ENCODE measurements at regions of chr22 and their contacts with region 1.

Region 1: GRCh38 chr22:50696797-50697561 is 24.4 kb downstream of the SHANK3 start:
- DNase-seq: peak; percentile 76
- ATAC-seq: peak; percentile 55
- H3K4me3 Mint-ChIP-seq: peak overlapping the region; percentile 73
- H3K27ac Mint-ChIP-seq: no peak overlapping the region
- H3K4me1 Mint-ChIP-seq: peaks cover 8% of the 10 kb centered on the region
- H3K27me3 Mint-ChIP-seq: peaks cover 37% of the 10 kb centered on the region
- CTCF ChIP-seq: peak; percentile 71

Region 2: GRCh38 chr22:50620593-50621355 is 76.2 kb before region 1 on chr22:
- CTCF ChIA-PET with region 1: interaction called, 78 read pairs
- POLR2A ChIA-PET with region 1: no interaction called
- DNase-seq: peak; percentile 92
- ATAC-seq: peak; percentile 93
- H3K4me3 Mint-ChIP-seq: peak overlapping the region; percentile 57
- H3K27ac Mint-ChIP-seq: no peak overlapping the region
- H3K4me1 Mint-ChIP-seq: peaks cover 24% of the 10 kb centered on the region
- H3K27me3 Mint-ChIP-seq: peaks cover 16% of the 10 kb centered on the region; the same call in 1 of the 2 replicates
- CTCF ChIP-seq: no peak; the same call in 1 of the 2 replicates

Region 3: GRCh38 chr22:50627642-50628542 is 69.1 kb before region 1 on chr22 and contains the start of gene ARSA:
- CTCF ChIA-PET with region 1: interaction called, 78 read pairs
- POLR2A ChIA-PET with region 1: interaction called, 3 read pairs
- DNase-seq: peak; percentile 82
- ATAC-seq: peak; percentile 83
- H3K4me3 Mint-ChIP-seq: peak within 1 kb of the TSS; percentile 80
- H3K27ac Mint-ChIP-seq: no peak within 1 kb of the TSS
- H3K4me1 Mint-ChIP-seq: peaks cover 7% of the 10 kb centered on the region
- H3K27me3 Mint-ChIP-seq: peaks cover 18% of the 10 kb centered on the region
- CTCF ChIP-seq: no peak
- total RNA-seq, gene ARSA: 17.7 to 18.8 TPM (median 17.8 TPM) in 3 replicates

Region 4: GRCh38 chr22:50641696-50642607 is 55.0 kb before region 1 on chr22:
- CTCF ChIA-PET with region 1: interaction called, 30 read pairs
- POLR2A ChIA-PET with region 1: no interaction called
- DNase-seq: peak; percentile 77
- ATAC-seq: peak; percentile 97
- H3K4me3 Mint-ChIP-seq: peak overlapping the region; percentile 43
- H3K27ac Mint-ChIP-seq: peak overlapping the region; percentile 70
- H3K4me1 Mint-ChIP-seq: peaks cover 23% of the 10 kb centered on the region
- H3K27me3 Mint-ChIP-seq: peaks cover 3% of the 10 kb centered on the region; the same call in 1 of the 2 replicates
- CTCF ChIP-seq: no peak

Region 5: DNA sequence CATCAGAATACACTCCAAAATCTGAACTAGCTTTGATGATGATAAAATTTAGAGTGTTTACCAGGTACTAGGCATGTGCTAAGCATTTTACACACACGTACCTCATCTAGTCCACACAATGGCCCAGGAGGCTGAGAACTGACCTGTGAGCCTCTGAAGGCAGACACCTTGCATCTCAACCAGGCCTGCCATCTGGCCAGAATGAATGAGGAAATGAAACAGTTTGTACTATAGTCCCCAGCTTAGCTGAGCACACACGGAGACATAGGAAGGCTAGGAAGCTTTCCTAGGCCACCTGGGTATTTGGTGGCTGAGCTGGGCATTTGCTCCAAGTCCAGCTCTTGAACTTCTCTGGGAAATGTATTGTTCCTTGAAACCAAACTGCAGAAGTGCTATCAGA is 31.2 kb before region 1 on chr22:
- CTCF ChIA-PET with region 1: no interaction called
- POLR2A ChIA-PET with region 1: no interaction called
- DNase-seq: no peak
- ATAC-seq: no peak
- H3K4me3 Mint-ChIP-seq: no peak overlapping the region
- H3K27ac Mint-ChIP-seq: no peak overlapping the region
- H3K4me1 Mint-ChIP-seq: no peaks in the 10 kb centered on the region
- H3K27me3 Mint-ChIP-seq: peaks cover 72% of the 10 kb centered on the region
- CTCF ChIP-seq: no peak

Region 6: DNA sequence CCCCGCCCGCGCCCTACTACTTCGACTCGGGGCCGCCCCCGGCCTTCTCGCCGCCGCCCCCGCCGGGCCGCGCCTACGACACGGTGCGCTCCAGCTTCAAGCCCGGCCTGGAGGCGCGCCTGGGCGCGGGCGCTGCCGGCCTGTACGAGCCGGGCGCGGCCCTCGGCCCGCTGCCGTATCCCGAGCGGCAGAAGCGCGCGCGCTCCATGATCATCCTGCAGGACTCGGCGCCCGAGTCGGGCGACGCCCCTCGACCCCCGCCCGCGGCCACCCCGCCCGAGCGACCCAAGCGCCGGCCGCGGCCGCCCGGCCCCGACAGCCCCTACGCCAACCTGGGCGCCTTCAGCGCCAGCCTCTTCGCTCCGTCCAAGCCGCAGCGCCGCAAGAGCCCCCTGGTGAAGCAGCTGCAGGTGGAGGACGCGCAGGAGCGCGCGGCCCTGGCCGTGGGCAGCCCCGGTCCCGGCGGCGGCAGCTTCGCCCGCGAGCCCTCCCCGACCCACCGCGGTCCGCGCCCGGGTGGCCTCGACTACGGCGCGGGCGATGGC is 23.4 kb after region 1 on chr22:
- CTCF ChIA-PET with region 1: interaction called, 11 read pairs
- POLR2A ChIA-PET with region 1: no interaction called
- DNase-seq: no peak
- ATAC-seq: peak; percentile 53
- H3K4me3 Mint-ChIP-seq: no peak overlapping the region
- H3K27ac Mint-ChIP-seq: no peak overlapping the region
- H3K4me1 Mint-ChIP-seq: peaks cover 4% of the 10 kb centered on the region
- H3K27me3 Mint-ChIP-seq: peaks cover 68% of the 10 kb centered on the region
- CTCF ChIP-seq: no peak

Region 7: DNA sequence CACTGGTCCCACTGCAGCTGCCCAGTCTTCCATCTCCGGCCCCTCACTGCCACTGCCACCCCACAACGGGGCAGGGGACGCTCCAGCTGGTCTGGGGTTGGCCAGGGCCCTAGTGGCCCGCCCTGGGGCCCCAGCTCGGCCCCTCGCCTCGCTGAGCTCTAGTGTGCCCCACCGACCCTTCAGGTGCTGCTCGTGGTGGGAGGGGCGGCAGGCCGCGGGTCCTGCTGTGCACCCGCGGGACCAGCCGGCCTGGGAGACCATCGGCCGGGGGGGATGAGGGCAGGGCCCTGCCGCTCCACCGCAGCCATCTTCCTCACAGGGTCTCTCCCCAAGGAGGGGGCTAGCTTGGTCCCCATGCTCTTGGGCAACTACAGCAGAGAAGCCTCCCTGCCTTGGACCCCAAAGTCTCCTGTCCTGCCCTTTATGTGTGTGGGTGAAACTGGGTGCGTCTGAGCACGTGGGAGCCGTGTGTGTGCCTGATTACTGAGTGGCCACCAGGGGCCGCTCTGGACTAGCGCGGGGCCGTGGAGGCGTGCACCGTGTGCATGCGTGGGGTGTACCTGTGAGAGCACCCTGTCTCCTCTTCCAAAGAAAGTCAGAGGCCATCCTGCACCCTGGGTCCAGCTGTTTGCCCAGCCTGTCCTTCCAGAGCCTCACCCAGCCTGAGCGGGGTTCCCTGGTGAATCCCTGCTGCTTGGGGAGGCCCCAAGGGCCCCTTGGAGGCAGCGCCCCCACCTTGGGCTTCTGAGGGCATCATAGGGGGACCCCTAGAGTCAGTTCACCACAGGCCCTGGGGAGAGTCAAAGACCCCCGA is 35.0 kb after region 1 on chr22:
- CTCF ChIA-PET with region 1: interaction called, 10 read pairs
- POLR2A ChIA-PET with region 1: no interaction called
- DNase-seq: peak; percentile 49
- ATAC-seq: peak; percentile 74
- H3K4me3 Mint-ChIP-seq: no peak overlapping the region; the same call in 1 of the 2 replicates
- H3K27ac Mint-ChIP-seq: no peak overlapping the region
- H3K4me1 Mint-ChIP-seq: peaks cover 3% of the 10 kb centered on the region; the same call in 1 of the 2 replicates
- H3K27me3 Mint-ChIP-seq: peaks cover 61% of the 10 kb centered on the region
- CTCF ChIP-seq: peak; percentile 62

Measured in WTC11 (cell line).